ENCODE measurements at regions of chr3 and their contacts with region 1.

Region 1: DNA sequence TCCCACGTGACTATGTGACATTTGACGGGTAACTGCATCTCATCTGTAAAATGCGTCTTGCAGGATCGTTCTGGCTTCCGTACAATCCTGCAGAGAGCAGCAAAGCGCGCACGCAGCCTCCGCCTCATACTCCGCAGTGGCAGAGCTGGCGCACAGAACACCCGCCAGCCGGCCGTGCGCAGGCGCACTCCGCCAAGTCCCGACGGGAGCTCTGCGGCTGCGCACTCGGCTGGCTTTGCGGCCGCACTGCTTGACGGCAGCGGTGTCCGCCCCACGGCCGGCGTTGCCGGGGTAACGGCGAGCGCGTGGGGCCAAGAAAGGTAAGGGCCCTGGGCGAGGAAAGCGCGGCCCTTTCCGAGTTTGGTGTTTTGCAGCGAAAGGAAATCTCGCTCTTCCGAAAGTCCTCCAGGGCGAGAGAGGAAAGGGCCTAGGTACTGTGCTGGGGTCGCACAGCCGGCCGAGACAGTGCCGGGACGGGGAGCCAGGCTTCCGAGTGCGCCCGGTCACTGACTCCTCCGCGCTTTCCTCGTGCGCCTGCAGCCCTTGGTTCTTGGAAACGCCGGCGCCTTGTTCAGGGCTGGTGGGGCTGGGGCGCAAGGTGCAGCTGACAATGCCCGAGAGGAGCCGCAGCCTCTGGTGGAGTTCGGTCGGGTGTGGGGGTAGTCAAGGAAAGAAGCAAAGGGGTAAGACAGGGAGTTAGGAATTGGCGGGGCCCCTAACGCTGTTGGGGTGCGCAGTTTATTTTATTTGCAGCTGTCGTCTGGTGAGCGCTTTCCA is at the start of gene TSEN2:
- DNase-seq: peak; percentile 97
- H3K4me3 ChIP-seq: peak within 1 kb of the TSS; percentile 60 to 81 (median 76)
- H3K27ac ChIP-seq: peak within 1 kb of the TSS; percentile 78 to 86 (median 82)
- H3K4me1 ChIP-seq: peaks cover 0 to 30% (median 18%) of the 10 kb centered on the region in 4 donors
- H3K27me3 ChIP-seq: no peaks in the 10 kb centered on the region
- CTCF ChIP-seq: no peak
- EP300 ChIP-seq: peak in 1 of 4 donors; percentile 33
- POLR2A ChIP-seq: peak in 1 of 2 donors; percentile 90
- total RNA-seq, gene TSEN2: 16.1 to 23.0 (median 20.4) TPM

Region 2: DNA sequence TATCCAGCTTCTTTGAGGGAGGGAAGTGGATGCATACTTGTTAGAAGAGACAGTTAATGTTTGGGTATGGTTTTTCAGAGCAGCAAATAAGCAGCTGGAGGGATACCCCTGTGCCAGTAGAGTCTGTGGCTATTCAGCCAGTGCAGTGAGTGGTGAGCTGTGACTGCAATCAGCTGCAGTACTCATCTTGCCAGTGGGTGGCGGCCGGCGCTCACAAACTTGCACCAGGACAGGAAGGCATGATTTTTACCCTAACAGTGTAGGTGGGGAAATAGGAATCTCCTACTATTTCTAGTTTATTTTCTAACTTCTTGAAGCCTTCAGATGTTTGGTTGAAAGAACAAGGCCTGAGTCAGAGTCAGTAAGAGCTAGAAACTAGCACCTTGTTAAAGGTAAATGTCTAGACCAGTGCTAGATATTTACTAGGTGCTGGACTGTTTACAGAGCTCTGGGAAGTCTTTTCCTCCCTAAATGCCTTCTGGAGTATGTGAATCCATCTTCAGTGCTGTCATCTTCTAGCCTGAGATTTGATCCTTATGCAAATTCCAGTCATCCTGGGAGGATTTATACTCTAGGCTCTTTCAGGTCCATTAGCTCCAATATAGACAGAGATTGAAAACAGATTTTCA is 349.2 kb before region 1 on chr3:
- intact Hi-C with region 1: loop called (anchors 1 kb)
- DNase-seq: peak; percentile 84
- H3K4me3 ChIP-seq: no peak overlapping the region
- H3K27ac ChIP-seq: no peak overlapping the region
- H3K4me1 ChIP-seq: no peaks in the 10 kb centered on the region
- H3K27me3 ChIP-seq: peaks cover 0 to 12% (median 0%) of the 10 kb centered on the region in 3 donors
- CTCF ChIP-seq: peak; percentile 62 to 87 (median 82)
- EP300 ChIP-seq: no peak
- POLR2A ChIP-seq: no peak

Region 3: DNA sequence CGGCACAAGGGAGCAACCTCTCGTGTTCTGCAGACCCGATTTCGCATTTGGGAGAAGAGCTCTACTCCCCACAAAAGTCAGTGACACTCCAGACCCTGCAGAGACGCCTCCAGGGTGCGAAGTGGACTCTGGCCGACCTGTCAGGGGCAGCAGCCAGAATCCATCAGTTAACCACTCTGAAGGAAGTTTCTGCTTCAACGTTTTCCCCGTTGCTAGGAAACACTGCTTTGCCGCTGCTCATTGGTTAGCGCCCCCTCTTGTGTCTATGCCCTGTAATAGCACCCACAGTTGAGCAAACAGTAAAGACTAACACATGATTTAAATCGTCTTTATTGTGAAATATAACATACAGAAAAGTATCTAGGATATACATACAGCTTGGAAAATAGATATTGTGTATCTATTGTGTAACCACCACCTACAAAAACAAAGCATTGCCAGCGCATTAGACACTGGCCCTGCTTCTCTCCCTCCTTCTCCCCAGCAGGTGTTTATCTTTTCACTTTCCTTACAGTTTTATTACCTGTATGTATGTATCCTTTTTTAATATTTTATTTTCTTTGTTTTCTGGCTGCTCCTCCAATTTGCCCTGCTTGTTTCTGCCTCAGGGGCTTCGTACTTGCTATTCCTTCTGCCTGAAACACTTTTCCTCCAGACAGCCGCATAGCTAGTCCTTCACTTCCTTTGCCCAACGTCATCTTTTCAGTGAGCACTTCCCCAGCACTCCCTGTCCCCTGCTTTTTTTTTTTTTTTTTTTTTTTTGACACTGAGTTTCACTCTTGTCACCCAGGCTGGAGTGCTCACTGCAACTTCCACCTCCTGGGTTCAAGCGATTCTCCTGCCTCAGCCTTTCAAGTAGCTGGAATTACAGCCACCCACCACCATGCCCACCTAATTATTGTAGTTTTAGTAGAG is 235.9 kb after region 1 on chr3:
- intact Hi-C with region 1: loop called (anchors 2 kb)
- DNase-seq: peak; percentile 89
- H3K4me3 ChIP-seq: peak overlapping the region in 3 of 4 donors; percentile 32 to 42 (median 41)
- H3K27ac ChIP-seq: peak overlapping the region in 2 of 4 donors; percentile 3 to 15
- H3K4me1 ChIP-seq: peaks cover 0 to 9% (median 7%) of the 10 kb centered on the region in 4 donors
- H3K27me3 ChIP-seq: no peaks in the 10 kb centered on the region
- CTCF ChIP-seq: peak; percentile 67 to 93 (median 88)
- EP300 ChIP-seq: no peak
- POLR2A ChIP-seq: no peak